ENCODE measurements at regions of chr3 and their contacts with region 1.

Region 1: GRCh38 chr3:129586746-129587430 is 19.6 kb downstream of the PLXND1 start:
- DNase-seq: peak in 1 of 2 donors; percentile 62
- ATAC-seq: peak in 1 of 4 donors; percentile 31
- H3K4me3 ChIP-seq: no peak overlapping the region
- H3K27ac ChIP-seq: no peak overlapping the region
- H3K4me1 ChIP-seq: peaks cover 8% of the 10 kb centered on the region
- H3K27me3 ChIP-seq: peaks cover 0 to 2% (median 0%) of the 10 kb centered on the region in 3 donors
- CTCF ChIP-seq: no peak

Region 2: GRCh38 chr3:129514110-129514509 is 72.8 kb before region 1 on chr3:
- intact Hi-C with region 1: loop called in 1 of 2 experiments (anchors 5 kb)
- DNase-seq: peak in 1 of 2 donors; percentile 74
- ATAC-seq: peak; percentile 63 to 96 (median 81)
- H3K4me3 ChIP-seq: no peak overlapping the region
- H3K27ac ChIP-seq: no peak overlapping the region
- H3K4me1 ChIP-seq: no peaks in the 10 kb centered on the region
- H3K27me3 ChIP-seq: no peaks in the 10 kb centered on the region
- CTCF ChIP-seq: no peak

Region 3: DNA sequence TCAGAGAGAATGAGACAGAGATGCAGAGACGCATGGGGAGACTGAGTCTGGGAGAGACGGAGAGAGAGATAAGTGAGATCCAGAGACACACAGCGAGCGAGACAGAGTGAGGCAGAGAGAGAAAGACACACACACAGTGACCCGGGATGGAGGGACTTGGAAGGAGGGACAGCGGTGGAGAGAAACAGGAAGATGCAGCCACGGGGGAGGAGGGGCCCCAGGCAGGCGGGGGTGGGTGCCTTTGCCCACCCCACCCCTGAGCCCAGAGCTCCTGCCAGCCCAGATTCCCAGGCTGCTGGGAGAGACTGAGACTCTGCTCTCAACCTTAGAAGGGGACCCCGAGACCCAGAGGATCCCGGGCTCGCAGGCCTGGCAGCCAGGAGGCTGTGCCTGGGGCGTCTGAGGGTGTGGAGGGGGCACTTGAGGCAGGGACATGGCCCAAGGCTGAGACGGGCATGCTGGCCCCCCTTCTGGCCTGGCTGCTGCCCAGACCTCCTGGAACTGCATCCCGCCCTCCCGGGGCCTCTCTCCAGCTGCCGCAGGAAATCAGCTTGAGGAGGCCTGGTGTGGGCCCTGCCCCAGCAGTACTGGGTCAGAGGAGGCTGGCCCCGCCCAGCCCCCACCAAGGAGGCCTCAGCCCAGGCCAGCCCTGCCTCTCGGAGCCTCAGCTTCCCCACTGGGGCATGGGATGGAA is 25.8 kb before region 1 on chr3:
- intact Hi-C with region 1: no loop called
- DNase-seq: peak; percentile 85 to 91
- ATAC-seq: peak; percentile 48 to 70 (median 62)
- H3K4me3 ChIP-seq: peak overlapping the region; percentile 4
- H3K27ac ChIP-seq: peak overlapping the region; percentile 66
- H3K4me1 ChIP-seq: peaks cover 24% of the 10 kb centered on the region
- H3K27me3 ChIP-seq: no peaks in the 10 kb centered on the region
- CTCF ChIP-seq: no peak